Posterior cingulate gyrus (tissue), 11 donors: ENCODE measurements at regions of chr18 and their contacts with region 1.

Region 1: DNA sequence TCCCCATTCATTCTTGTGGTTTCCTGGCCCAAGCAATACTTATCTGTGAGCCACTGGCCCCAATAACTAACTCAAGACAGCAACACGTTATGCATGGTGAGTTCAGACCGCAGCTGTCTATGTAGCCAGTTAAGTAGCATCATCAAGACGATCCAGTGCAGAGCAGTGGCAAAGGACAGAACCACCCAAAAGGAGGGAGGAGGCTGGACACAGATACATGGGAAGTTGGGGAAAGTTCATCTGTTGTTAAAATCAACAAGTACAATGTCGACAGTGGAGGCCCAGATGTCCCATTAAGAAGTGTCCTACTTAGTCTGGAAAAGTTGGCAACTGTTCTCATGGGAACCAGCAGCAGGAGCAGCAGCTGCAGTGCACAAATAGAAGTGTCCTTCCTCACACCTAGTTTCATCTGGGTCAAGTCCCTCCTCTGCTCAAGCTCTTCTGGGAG is 106.9 kb upstream of the THOC1 start:
- DNase-seq: no peak

Region 2: DNA sequence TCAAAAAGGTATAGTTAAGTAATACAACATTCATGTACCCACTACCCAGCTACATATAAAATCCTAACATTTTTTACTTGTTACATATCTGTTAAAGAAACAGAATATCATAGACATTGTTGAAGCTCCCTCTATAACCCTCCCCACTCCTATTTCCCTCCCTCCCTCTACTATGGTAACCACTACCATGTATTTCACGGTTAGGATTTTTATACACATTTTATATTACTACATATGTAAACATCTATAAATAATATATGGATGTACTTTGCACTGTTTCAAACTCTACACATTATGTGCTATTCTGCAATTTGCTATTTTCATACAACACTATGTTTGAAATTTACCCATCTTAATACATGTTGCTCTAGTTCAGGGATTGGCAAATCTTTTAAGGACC is 143.2 kb before region 1 on chr18:
- intact Hi-C with region 1: no loop called
- DNase-seq: no peak

Region 3: GRCh38 chr18:323253-323622 is 51.5 kb before region 1 on chr18:
- intact Hi-C with region 1: no loop called
- DNase-seq: no peak

Region 4: GRCh38 chr18:335733-336132 is 39.0 kb before region 1 on chr18:
- intact Hi-C with region 1: no loop called
- DNase-seq: no peak

Region 5: GRCh38 chr18:434410-434809 is 59.7 kb after region 1 on chr18:
- intact Hi-C with region 1: loop called (anchors 10 kb)
- DNase-seq: no peak

Region 6: DNA sequence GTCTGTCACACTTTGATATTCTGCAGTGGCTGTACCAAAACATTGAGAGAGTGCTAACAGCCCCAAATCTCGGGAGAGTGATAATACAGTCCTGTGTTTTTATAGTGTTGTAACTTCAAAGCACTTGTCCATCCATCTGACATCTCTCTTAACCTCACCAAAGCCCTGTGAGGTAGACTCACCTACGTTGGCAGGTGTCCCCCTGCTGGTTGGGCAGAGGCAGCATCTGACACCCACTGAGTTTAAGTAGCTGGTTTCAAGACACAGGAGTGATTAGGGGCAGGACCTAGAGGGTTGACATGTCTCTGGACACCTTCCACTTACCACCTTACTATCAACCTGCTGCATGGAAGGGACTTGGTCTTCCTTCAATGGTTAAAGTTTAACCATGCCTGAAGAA is 102.8 kb after region 1 on chr18:
- intact Hi-C with region 1: loop called (anchors 10 kb)
- DNase-seq: no peak

Region 7: DNA sequence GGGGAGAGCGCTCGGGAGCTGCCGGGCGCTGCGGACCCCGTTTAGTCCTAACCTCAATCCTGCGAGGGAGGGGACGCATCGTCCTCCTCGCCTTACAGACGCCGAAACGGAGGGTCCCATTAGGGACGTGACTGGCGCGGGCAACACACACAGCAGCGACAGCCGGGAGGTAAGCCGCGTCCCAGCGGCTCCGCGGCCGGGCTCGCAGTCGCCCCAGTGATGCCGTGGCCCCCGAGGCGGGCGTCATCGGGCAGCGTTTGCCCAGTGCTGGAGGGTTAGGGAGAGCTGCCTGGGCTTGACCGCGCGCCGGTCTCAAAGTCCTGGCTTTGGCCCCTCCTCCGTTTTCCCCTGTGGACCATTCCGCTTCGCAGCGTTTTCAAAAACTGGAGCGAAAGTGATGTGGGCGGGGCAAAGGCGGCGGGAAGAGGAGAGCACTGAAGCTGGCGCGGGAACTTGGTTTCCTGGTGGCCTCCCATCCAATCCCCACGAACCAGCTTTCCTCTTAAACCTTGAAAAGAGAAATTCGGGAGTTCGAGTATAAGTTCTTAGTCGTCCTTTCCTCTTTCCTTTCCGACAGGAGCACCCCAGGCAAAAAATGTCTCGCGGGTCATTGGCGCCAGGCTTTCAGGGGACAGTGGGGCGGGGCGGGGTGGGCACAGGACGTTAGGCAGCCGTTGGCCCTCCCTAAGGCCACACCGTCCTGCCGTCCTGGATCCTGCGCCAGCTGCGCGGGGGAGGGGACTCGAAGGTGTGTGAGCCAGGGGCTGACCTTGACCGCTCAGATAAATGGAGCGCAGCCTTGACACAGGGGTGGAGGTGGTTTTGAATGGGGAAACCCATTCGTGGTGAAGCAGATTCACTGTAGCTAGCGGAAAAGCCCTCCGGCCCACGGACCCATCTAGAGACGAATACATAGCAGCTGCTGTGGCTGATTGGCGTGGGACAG is 283.5 kb after region 1 on chr18:
- intact Hi-C with region 1: no loop called
- DNase-seq: peak; percentile 67 to 97 (median 82)